ENCODE measurements at regions of chrX and their contacts with region 1.

Region 1: DNA sequence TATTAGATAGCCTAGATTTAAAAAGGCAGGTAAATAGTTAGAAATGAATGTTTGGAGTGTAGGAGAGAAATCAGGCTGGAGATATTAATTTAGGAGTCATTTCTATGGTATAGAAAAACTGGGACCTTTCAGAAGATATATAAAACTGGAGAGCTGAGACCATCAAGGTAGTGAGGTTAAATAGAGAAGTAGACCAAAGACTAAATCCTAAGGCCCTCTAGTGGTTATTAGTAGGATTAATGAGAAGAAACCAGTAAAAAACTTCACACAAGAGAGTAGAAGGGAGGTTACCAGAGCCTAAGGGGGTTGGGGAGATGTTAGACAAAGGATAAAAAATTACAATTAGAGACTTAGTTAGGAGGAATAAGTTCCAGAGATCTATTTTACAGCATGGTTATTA is 351.0 kb upstream of the SPANXN1 start:
- DNase-seq: peak; percentile 36
- H3K4me3 Mint-ChIP-seq: no peak overlapping the region
- H3K27ac Mint-ChIP-seq: no peak overlapping the region
- H3K4me1 Mint-ChIP-seq: no peaks in the 10 kb centered on the region
- H3K27me3 Mint-ChIP-seq: no peaks in the 10 kb centered on the region
- CTCF ChIP-seq: peak; percentile 31

Region 2: DNA sequence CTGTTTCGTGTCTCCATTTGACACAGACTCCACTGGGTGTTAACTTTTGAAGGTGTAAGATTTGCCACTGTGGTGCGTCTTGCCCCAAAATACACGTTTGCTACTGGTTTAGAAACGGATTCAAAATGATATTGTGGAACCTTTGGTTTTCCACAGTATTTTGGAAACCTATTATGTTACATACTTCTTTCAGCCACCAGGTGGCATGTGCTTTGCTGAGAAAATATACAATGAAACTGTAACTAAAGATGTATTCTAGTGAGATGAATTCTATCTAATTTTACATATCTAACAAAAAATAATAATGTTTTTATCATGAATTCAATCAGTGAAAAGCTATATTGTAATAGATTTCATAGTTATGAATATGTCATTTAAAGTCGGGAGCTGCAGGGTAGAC is 1232.0 kb before region 1 on chrX:
- CTCF ChIA-PET with region 1: no interaction called
- POLR2A ChIA-PET with region 1: no interaction called
- intact Hi-C with region 1: loop called (anchors 10 kb)
- DNase-seq: peak; percentile 51
- H3K4me3 Mint-ChIP-seq: no peak overlapping the region
- H3K27ac Mint-ChIP-seq: no peak overlapping the region
- H3K4me1 Mint-ChIP-seq: peaks cover 3% of the 10 kb centered on the region
- H3K27me3 Mint-ChIP-seq: no peaks in the 10 kb centered on the region
- CTCF ChIP-seq: peak; percentile 55

Region 3: DNA sequence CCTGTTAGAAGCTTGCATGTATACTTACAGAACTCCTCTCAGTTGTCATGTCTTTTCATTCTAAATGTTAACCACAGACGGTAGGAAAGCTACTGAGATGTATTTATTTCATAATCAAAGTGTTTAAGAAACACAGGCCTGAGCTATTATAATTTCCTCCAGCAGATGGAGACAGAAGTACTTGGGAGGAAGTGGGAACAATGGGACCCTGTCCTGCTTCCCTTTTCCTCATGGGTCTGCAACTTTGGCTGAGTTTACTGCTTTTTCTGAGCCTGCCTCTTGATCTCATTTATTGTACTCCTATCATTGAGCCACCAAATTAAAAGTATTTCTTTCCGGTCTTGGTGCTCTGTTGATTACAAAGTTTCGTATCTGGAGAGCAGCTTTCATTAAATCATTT is 1108.1 kb before region 1 on chrX:
- CTCF ChIA-PET with region 1: interaction called, 4 read pairs
- POLR2A ChIA-PET with region 1: no interaction called
- intact Hi-C with region 1: loop called (anchors 1 kb)
- DNase-seq: peak; percentile 52
- H3K4me3 Mint-ChIP-seq: no peak overlapping the region
- H3K27ac Mint-ChIP-seq: no peak overlapping the region
- H3K4me1 Mint-ChIP-seq: no peaks in the 10 kb centered on the region
- H3K27me3 Mint-ChIP-seq: no peaks in the 10 kb centered on the region
- CTCF ChIP-seq: peak; percentile 73

Region 4: GRCh38 chrX:143800150-143800549 is 1096.2 kb before region 1 on chrX:
- CTCF ChIA-PET with region 1: no interaction called
- POLR2A ChIA-PET with region 1: no interaction called
- intact Hi-C with region 1: no loop called
- DNase-seq: no peak
- H3K4me3 Mint-ChIP-seq: no peak overlapping the region
- H3K27ac Mint-ChIP-seq: no peak overlapping the region
- H3K4me1 Mint-ChIP-seq: no peaks in the 10 kb centered on the region
- H3K27me3 Mint-ChIP-seq: no peaks in the 10 kb centered on the region
- CTCF ChIP-seq: no peak

Region 5: GRCh38 chrX:144730471-144730870 is 165.9 kb before region 1 on chrX:
- CTCF ChIA-PET with region 1: interaction called, 3 read pairs
- POLR2A ChIA-PET with region 1: no interaction called
- intact Hi-C with region 1: loop called (anchors 5 kb)
- DNase-seq: peak; percentile 79
- H3K4me3 Mint-ChIP-seq: peak overlapping the region; percentile 65
- H3K27ac Mint-ChIP-seq: peak overlapping the region; percentile 97
- H3K4me1 Mint-ChIP-seq: peaks cover 44% of the 10 kb centered on the region
- H3K27me3 Mint-ChIP-seq: no peaks in the 10 kb centered on the region
- CTCF ChIP-seq: no peak

Region 6: DNA sequence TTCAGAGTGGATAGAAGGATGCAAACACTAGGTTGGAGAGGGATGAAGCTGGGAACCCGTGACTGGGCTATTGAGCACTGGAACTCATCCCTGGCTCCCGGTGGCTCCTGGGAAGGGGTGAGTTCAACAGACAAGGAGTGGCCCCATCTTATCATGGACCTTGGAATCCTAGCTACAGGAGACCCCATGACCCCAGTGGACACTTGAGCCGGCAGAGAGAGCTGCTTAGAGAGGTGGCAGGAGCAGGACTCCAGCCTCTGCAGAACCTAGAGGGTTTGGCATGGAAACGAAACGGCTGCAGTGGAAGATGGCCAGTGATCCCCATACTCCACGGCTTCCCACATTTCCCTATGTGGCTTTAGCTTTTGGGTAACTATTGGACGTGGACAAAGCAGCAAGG is 145.2 kb after region 1 on chrX:
- CTCF ChIA-PET with region 1: no interaction called
- POLR2A ChIA-PET with region 1: no interaction called
- intact Hi-C with region 1: no loop called
- DNase-seq: no peak
- H3K4me3 Mint-ChIP-seq: no peak overlapping the region
- H3K27ac Mint-ChIP-seq: no peak overlapping the region
- H3K4me1 Mint-ChIP-seq: no peaks in the 10 kb centered on the region
- H3K27me3 Mint-ChIP-seq: no peaks in the 10 kb centered on the region
- CTCF ChIP-seq: no peak

Measured in MCF 10A (cell line).